CD8-positive, alpha-beta memory T cell (primary cell): ENCODE measurements at regions of chr21 and their contacts with region 1.

Region 1: GRCh38 chr21:34745557-34746255 is 76.9 kb downstream of the CLIC6 start:
- DNase-seq: peak; percentile 6 to 57 (median 32)
- H3K4me3 ChIP-seq: no peak overlapping the region
- H3K4me3 Mint-ChIP-seq: peak overlapping the region in 6 of 7 donors; percentile 11 to 70 (median 59)
- H3K27ac ChIP-seq: no peak overlapping the region
- H3K27ac Mint-ChIP-seq: peak overlapping the region in 2 of 8 donors; percentile 2 to 68
- H3K4me1 ChIP-seq: no peaks in the 10 kb centered on the region
- H3K4me1 Mint-ChIP-seq: peaks cover 3 to 5% (median 4%) of the 10 kb centered on the region in 3 donors
- H3K27me3 ChIP-seq: no peaks in the 10 kb centered on the region
- H3K27me3 Mint-ChIP-seq: peaks cover 4 to 24% of the 10 kb centered on the region in 2 donors

Region 2: DNA sequence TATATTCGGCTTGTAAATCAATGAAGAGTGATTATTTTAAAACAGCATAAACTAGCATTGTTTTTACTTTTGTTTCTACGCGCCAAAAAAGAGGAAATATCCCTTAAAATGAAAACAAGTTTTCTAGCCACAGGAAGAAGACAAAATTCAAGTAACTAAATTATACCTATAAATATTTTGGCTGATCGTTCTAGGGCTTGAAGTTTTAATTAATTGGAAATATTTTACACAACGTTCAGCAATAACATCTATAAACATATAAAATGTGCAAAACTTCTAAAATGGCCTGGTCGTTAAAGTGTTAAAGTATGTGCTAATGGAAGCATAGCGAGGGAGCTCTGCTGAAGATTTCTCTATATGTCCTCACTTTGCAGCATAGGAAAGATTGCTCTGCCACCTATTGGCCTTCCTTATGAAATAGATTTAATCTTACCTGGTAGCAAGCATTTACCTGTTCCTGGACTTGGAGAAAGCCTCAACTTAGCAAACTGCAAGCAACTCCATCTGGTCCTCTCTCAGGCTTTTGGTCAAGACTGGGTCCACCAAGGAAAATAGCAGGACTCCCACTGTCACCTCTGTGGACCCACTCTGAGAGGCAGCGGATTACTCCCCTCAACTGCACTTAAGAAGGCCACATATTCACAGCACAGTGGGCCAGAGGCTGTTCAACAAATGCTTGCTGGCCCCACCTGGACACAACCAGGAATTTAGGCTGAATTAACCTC is 654.7 kb after region 1 on chr21:
- CTCF ChIA-PET with region 1: interaction called, 30 read pairs
- POLR2A ChIA-PET with region 1: no interaction called
- DNase-seq: peak in 4 of 5 donors; percentile 8 to 56 (median 48)
- H3K4me3 ChIP-seq: no peak overlapping the region
- H3K4me3 Mint-ChIP-seq: no peak overlapping the region
- H3K27ac ChIP-seq: no peak overlapping the region
- H3K27ac Mint-ChIP-seq: no peak overlapping the region
- H3K4me1 ChIP-seq: no peaks in the 10 kb centered on the region
- H3K4me1 Mint-ChIP-seq: no peaks in the 10 kb centered on the region
- H3K27me3 ChIP-seq: no peaks in the 10 kb centered on the region
- H3K27me3 Mint-ChIP-seq: peaks cover 0 to 14% of the 10 kb centered on the region in 2 donors

Region 3: DNA sequence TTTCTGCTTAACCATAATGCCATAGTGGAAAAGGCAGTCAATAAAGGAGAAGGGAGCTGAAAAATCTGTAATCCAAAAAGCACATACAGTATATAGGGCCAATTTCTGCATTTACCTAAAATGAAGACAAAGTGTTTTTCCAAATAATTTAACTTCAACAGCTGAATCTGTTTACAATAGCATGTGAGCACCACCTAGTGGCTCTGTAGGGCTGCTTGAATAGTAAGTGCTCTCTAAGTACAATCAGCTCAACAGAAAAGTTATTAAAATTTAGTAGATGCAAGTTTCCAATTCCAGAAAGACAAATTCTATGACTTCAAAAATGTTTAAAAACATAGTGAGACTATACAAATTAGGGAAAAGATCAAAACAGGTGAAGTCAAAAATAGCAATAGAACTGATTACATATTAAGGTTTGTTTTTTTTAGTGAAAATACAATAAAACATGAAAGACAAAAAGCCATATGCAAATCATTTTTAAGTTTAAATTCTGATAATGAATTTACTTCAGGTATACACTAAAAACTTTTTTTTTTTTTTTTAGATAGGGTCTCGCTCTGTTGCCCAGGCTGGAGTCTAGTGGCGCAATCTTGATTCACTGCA is 1094.6 kb after region 1 on chr21:
- CTCF ChIA-PET with region 1: interaction called, 17 read pairs
- POLR2A ChIA-PET with region 1: no interaction called
- DNase-seq: peak; percentile 13 to 54 (median 22)
- H3K4me3 ChIP-seq: no peak overlapping the region
- H3K4me3 Mint-ChIP-seq: no peak overlapping the region
- H3K27ac ChIP-seq: no peak overlapping the region
- H3K27ac Mint-ChIP-seq: peak overlapping the region in 1 of 8 donors; percentile 8
- H3K4me1 ChIP-seq: no peaks in the 10 kb centered on the region
- H3K4me1 Mint-ChIP-seq: no peaks in the 10 kb centered on the region
- H3K27me3 ChIP-seq: no peaks in the 10 kb centered on the region
- H3K27me3 Mint-ChIP-seq: peaks cover 4 to 15% of the 10 kb centered on the region in 2 donors

Region 4: GRCh38 chr21:36028127-36029069 is 1282.7 kb after region 1 on chr21:
- CTCF ChIA-PET with region 1: interaction called, 15 read pairs
- POLR2A ChIA-PET with region 1: no interaction called
- DNase-seq: peak; percentile 41 to 74 (median 53)
- H3K4me3 ChIP-seq: no peak overlapping the region
- H3K4me3 Mint-ChIP-seq: peak overlapping the region in 1 of 7 donors; percentile 33
- H3K27ac ChIP-seq: no peak overlapping the region
- H3K27ac Mint-ChIP-seq: peak overlapping the region in 2 of 8 donors; percentile 6 to 9
- H3K4me1 ChIP-seq: peaks cover 4% of the 10 kb centered on the region
- H3K4me1 Mint-ChIP-seq: peaks cover 5 to 6% (median 6%) of the 10 kb centered on the region in 3 donors
- H3K27me3 ChIP-seq: no peaks in the 10 kb centered on the region
- H3K27me3 Mint-ChIP-seq: no peaks in the 10 kb centered on the region